ENCODE measurements at regions of chr9 and their contacts with region 1.

Region 1: DNA sequence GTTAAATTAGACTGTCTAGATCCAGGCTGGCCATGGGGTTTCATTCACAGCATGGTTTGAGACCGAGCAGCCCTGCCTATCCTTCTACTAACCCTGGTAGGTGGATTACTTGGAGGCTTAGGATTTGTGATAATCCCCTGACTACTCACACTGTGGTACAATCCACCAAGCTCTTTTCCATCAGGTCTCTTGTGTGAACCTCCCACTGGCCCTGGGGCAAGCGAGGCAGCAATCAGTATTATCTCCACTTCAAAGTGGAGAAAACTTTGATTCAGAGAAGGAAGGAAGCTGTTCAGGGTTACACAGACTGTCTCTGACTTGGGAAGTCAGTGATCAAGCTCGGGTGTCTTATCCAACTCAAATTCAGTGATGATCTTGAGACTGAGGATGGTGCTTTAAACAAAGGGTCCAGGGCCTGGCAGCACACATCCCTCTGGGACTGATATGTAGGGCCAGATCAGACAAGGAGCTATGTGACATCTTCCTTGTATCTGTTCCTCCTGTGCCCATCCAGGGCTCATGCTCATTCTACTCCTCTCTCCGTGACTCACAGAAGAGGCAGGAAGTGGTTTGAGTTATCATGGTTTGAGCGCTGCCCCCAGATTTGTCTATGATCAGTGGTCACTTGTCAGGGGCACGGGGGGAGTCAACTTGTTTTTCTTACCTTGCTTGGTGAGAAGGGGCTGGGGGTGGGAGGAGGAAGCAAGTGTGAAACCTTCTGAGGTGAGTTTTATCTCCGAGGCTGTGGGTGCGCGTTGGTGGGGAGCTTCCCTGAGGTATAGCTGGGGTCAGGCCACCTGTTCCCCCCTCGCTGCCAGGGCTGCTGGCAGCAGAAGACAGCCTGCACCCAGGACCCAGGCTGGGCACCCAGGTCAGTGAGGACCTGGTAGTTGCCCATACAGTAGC is 48.6 kb downstream of the RGS3 start:
- DNase-seq: no peak
- H3K4me3 ChIP-seq: no peak overlapping the region
- H3K27ac ChIP-seq: no peak overlapping the region
- H3K4me1 ChIP-seq: peaks cover 10 to 44% of the 10 kb centered on the region in 2 donors
- H3K27me3 ChIP-seq: no peaks in the 10 kb centered on the region
- CTCF ChIP-seq: no peak
- POLR2A ChIP-seq: no peak

Region 2: DNA sequence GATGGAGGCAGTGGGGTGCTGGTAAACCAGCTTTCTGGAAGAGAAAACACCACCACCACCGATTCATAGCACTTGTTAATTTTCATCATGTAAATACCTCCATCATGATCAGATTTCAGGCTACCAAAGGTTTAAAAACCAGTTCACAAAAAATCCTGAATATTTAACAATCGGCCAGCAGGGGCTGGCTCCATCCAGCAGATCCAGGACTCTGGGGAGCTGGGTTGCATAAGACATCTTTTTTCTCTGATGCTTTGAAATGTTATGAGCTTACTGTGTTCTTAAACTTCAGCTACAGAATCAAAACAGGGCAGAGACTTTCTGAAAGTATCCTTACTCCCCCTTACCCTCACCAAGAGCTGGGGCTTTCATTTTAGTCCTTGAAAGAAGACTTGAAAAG is 194.3 kb before region 1 on chr9:
- intact Hi-C with region 1: no loop called
- DNase-seq: no peak
- H3K4me3 ChIP-seq: no peak overlapping the region
- H3K27ac ChIP-seq: no peak overlapping the region
- H3K4me1 ChIP-seq: no peaks in the 10 kb centered on the region
- H3K27me3 ChIP-seq: no peaks in the 10 kb centered on the region
- CTCF ChIP-seq: no peak
- POLR2A ChIP-seq: no peak

Region 3: DNA sequence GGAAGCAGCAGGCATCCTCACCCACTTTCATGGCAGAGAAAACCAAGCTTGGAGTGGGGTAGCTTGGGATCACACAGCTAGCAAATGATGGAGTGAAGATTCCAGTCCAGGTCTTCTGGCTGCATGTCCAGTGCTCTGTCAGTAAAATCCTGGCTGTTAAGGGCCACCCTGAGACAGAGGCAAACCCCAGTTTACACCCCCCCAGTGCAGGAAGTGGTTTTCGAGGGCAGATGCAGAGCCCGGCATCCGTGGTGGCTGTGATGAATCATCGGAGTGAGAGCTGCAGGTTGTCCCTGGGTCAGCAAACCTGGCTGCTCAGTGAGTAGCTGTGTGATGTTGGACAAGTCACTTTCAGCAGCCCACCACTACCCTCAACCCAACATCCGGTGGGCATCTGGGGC is 66.8 kb after region 1 on chr9:
- intact Hi-C with region 1: loop called (anchors 10 kb)
- DNase-seq: peak; percentile 40 to 50
- H3K4me3 ChIP-seq: no peak overlapping the region
- H3K27ac ChIP-seq: peak overlapping the region in 2 of 3 donors; percentile 96 to 97
- H3K4me1 ChIP-seq: peaks cover 39 to 76% of the 10 kb centered on the region in 2 donors
- H3K27me3 ChIP-seq: no peaks in the 10 kb centered on the region
- CTCF ChIP-seq: no peak
- POLR2A ChIP-seq: no peak